Endothelial cell of umbilical vein (primary cell): ENCODE measurements at regions of chr4 and their contacts with region 1.

Region 1: DNA sequence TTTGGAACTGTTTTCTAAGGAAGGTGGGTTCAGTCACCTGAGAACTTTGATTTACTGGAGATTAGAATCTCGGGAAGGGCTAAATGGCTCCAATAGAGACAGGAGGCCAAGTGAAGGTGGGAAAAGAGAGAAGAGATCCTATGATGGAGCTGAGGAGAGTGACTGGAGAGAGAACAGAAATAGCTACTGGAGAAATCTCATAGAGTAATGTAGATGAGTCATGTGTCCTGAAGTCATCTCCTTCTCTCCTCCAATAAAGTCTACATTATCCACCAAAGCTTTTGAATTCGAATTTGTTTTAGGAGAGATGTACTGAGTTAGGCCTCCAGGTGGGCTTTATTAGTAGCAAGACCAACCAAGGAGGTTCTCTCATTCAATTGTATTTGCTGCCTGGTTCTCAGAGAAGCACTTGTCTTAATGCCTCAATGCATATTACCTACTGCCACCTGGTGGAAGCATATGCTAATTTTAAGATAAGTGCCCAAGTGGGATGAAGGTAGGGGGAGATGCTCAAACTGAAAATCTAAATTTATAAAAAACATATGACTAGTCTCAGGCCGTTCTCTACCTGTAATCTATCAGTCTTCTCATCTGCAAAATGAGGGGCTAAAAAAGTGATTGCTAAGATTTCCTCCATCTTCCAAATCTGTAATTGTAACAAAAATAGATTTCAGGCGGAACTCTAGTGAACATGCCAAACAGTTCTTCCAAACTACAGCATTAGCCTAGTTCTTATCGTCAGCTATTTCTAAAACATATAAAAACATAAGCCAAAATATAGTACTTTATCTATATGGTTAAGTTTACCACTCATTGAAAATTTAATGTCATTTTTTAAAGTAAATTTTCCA is 24.4 kb downstream of the TXK start:
- DNase-seq: peak; percentile 66
- H3K4me3 ChIP-seq: no peak overlapping the region
- H3K27ac ChIP-seq: no peak overlapping the region
- H3K4me1 ChIP-seq: no peaks in the 10 kb centered on the region
- H3K27me3 ChIP-seq: no peaks in the 10 kb centered on the region
- CTCF ChIP-seq: peak; percentile 44 to 53
- POLR2A ChIP-seq: no peak

Region 2: DNA sequence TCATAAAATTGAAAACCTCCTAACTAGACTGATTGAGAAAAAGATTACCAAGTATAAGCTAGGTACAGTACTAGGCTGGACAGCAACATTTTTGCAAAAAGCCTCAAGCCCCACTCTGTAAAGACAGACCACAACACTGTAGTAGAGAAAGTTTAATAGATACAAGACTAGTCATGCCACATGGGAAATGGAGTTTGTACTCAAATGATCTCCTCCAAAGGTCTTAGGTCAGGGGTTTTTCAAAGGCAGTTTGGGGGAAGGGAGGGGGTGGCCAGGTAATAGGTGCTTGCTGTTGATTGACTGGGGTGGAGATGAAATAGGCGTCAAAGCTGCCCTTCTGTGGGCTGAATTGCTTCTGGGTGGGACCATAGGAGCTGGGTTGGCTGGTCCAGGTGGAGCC is 107.4 kb before region 1 on chr4:
- CTCF ChIA-PET with region 1: interaction called, 16 read pairs
- POLR2A ChIA-PET with region 1: no interaction called
- dilution Hi-C with region 1: no loop called
- intact Hi-C with region 1: loop called (anchors 1 kb)
- DNase-seq: no peak
- H3K4me3 ChIP-seq: no peak overlapping the region
- H3K27ac ChIP-seq: no peak overlapping the region
- H3K4me1 ChIP-seq: no peaks in the 10 kb centered on the region
- H3K27me3 ChIP-seq: no peaks in the 10 kb centered on the region
- CTCF ChIP-seq: no peak
- POLR2A ChIP-seq: no peak

Region 3: DNA sequence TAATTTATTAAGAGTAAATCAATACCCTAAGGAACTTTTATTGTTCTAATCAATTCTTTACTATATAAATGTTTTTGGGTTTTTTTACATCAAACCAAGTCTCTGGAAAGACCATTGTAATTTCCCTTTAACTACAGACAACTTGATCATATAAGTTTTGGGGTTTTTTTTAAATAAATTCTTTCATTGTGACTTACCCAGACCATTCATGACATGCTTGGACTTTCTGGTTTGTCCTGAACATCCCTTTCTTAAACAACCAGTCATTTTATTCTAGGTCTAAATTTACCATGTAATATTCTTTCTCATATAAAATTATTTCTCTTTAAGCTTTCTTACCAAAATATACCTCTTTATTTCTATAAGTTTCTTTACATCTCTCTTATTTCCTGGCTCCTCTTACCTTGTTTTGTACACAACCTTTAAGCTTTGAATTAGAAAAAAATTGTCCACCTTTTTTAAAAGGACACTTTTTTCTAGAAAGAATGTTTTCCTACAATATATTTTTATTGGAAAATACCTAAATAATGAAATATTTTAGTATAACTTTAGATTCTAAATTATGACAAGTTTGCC is 101.5 kb before region 1 on chr4:
- CTCF ChIA-PET with region 1: interaction called, 16 read pairs
- POLR2A ChIA-PET with region 1: no interaction called
- dilution Hi-C with region 1: no loop called
- intact Hi-C with region 1: loop called (anchors 1 kb)
- DNase-seq: no peak
- H3K4me3 ChIP-seq: no peak overlapping the region
- H3K27ac ChIP-seq: no peak overlapping the region
- H3K4me1 ChIP-seq: no peaks in the 10 kb centered on the region
- H3K27me3 ChIP-seq: no peaks in the 10 kb centered on the region
- CTCF ChIP-seq: no peak
- POLR2A ChIP-seq: no peak

Region 4: GRCh38 chr4:48033825-48034413 is 75.7 kb before region 1 on chr4:
- CTCF ChIA-PET with region 1: interaction called, 16 read pairs
- POLR2A ChIA-PET with region 1: no interaction called
- dilution Hi-C with region 1: no loop called
- intact Hi-C with region 1: no loop called
- DNase-seq: peak; percentile 53
- H3K4me3 ChIP-seq: no peak overlapping the region
- H3K27ac ChIP-seq: no peak overlapping the region
- H3K4me1 ChIP-seq: no peaks in the 10 kb centered on the region
- H3K27me3 ChIP-seq: no peaks in the 10 kb centered on the region
- CTCF ChIP-seq: peak; percentile 48 to 53
- POLR2A ChIP-seq: no peak

Region 5: DNA sequence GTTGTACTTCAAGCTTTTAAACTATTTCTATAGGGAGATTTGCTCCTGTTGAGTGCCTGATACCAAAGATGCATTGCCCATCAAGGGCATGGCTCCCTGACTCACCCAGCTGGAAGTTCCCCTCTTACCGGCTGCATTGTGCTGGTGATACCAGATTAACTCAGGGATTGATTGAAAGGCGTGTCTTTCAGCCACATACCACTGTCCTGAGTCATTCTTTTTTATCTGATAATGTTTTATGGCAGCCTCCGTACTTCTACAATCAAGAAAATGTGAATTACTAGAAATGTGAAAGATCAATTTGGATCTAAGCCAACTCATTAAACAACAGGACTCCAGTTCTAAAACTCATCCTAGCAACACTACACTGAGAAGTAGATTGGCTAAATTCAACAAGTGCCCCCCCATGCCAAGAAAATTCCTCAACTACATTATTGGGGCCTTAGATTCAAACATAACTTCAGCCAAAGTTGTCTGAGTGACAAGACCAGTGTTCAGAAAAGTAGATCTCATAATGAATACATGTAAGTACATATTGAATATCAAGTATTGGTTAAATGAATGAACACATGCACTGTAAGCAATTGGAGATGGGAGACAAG is 15.6 kb before region 1 on chr4:
- CTCF ChIA-PET with region 1: interaction called, 36 read pairs
- POLR2A ChIA-PET with region 1: no interaction called
- dilution Hi-C with region 1: no loop called
- intact Hi-C with region 1: no loop called
- DNase-seq: peak; percentile 87
- H3K4me3 ChIP-seq: no peak overlapping the region
- H3K27ac ChIP-seq: no peak overlapping the region
- H3K4me1 ChIP-seq: peaks cover 15% of the 10 kb centered on the region
- H3K27me3 ChIP-seq: no peaks in the 10 kb centered on the region
- CTCF ChIP-seq: no peak
- POLR2A ChIP-seq: no peak

Region 6: GRCh38 chr4:48127682-48128394 is 18.2 kb after region 1 on chr4:
- CTCF ChIA-PET with region 1: interaction called, 13 read pairs
- POLR2A ChIA-PET with region 1: no interaction called
- dilution Hi-C with region 1: no loop called
- intact Hi-C with region 1: no loop called
- DNase-seq: peak; percentile 95
- H3K4me3 ChIP-seq: peak overlapping the region in 1 of 3 experiments; percentile 2
- H3K27ac ChIP-seq: peak overlapping the region; percentile 88
- H3K4me1 ChIP-seq: peaks cover 19% of the 10 kb centered on the region
- H3K27me3 ChIP-seq: no peaks in the 10 kb centered on the region
- CTCF ChIP-seq: peak; percentile 55 to 58
- POLR2A ChIP-seq: peak; percentile 33